Dorsolateral prefrontal cortex (tissue), 120 donors: ENCODE measurements at regions of chr10 and their contacts with region 1.

Region 1: DNA sequence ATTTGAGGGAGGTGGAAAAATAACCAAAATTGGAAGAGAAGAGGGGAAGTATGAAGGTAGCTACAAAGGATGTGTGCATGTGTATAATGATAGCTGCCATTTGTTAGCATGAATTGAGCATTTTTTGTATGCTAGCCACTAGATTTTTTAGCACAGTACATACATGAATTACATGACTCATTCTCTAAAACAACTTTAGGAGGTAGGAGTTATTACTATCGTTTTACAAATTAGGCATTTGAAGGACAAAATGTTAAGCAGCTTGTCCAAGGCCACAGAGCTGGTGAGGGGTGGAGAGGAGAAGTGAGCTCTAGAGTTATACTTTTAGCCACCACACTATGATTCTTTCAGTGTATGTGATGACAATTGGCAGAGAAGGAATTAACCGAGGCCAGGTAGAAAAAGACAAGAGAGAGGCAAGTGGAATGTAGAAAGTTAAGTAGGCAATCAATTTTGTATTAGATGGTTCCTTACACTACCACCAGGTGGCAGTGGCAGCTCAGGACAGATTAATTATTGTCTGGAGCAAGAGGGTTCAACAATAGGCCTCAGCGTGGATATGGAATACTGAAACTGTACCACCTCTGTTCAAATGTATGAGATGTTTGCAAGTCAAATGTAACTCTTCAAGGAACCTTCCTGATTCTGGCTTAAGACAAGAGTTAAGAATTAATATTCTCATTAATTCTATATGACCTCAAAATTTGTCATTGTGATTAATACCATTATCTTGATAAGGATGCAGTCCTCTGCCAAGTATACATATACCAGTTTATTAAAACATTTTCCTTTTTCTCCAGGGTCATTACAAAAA is 128.0 kb downstream of the MBL2 start:
- DNase-seq: peak in 4 of 10 donors; percentile 21 to 61 (median 50)
- H3K4me3 ChIP-seq: no peak overlapping the region
- H3K27ac ChIP-seq: peak overlapping the region in 9 of 59 donors; percentile 2 to 54 (median 22)
- H3K27me3 ChIP-seq: no peaks in the 10 kb centered on the region
- CTCF ChIP-seq: peak; percentile 67 to 97 (median 88)

Region 2: DNA sequence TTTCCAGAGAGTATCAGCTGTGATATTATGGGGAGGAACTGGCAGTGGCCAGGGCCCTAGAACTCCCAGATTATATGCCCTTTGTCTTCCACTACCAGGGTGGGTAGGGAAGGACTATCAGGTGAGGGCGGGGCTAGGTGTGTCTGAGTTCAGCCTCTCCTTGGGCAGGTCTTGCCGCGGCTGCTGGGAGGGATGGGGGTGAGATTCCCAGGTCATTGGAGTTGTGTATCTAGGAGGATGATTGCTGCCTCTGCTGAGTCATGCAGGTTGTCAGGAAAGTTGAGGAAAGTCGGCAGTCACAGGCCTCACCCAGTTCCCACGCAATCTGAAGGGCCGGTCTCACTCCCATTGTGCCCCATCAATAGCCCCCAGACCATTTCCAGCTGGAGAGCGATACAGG is 145.3 kb before region 1 on chr10:
- intact Hi-C with region 1: no loop called
- DNase-seq: no peak
- H3K4me3 ChIP-seq: no peak overlapping the region
- H3K27ac ChIP-seq: no peak overlapping the region
- H3K27me3 ChIP-seq: peaks cover 0 to 4% (median 0%) of the 10 kb centered on the region in 45 donors
- CTCF ChIP-seq: no peak

Region 3: DNA sequence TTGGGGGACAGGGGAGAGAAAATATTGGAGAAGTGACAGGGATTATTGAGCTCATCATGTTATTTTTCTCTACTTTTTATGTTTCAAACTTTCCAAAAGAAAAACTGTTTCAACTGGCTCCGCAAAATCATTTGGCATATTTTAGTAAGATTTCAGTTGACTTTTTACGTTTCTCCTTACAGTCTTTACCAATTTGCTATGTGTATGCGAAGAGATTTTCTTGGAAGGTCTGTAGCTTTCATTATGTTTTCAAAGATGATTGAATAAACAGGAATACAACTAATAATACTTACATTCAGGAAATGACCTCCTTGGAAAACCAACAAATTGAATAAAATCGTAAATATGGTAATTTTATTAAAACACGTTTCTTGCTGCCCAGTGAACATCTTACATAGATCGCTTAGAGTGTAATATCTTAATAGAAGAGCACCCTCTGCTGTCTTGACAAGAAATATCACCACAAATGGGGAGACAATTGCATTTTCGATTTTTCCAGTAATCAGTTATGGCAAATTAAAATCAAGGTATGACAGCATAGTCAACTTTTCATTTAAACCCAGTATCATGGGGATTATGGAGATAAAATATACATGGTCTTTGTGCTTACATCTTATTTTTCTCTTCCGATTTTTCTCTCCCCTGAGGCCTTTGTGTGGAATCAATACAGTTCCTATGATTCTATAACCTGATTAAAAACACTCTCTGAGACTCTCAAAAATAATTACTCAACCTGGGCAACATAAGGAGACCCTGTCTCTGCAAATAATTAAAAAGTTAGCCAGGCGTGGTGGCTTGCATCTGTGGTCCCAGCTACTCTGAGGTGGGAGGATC is 84.9 kb after region 1 on chr10:
- intact Hi-C with region 1: loop called (anchors 1 to 2 kb)
- DNase-seq: no peak
- H3K4me3 ChIP-seq: peak overlapping the region in 43 of 59 donors; percentile 7 to 54 (median 32)
- H3K27ac ChIP-seq: no peak overlapping the region
- H3K27me3 ChIP-seq: no peaks in the 10 kb centered on the region
- CTCF ChIP-seq: peak; percentile 35 to 88 (median 74)

Region 4: DNA sequence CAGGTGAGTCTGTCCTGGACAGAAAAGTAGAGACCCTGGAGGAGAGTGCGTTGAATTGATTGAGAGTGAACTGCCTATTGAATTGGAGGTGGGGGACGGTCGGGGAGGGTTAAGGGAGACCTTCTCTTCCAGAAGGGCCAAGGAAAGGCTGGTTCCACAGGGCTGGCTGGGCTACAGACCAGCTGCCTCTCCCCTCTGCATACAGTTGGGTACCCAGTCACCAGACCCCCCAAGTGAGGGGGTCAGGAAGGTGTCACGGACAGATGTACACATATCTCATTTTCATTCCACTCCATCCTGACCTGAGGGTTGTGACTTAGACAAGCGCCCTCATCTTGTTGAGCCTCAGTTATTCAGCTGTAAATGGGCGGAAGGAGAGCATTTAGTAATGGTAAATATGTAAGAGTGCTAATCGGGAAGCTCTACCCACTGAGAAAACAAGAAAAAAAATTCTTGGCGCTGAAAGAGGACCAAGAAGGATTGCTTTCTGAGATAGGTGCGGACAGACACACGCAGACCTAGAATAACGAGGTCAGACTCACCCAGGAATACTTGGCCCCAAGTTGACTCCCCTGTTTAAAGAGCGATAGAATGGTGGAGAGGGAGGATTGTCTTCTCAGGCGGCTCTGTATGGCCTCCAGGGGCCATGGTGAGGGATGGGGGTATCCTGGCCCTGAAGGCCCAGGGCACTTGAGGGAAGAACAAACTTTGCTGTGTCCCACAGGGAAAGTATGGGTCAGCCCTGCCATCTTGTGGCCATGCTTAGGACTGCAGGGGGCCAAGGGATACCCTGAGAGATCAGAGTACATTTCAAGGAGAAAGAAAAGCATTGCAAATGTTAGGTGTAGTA is 135.2 kb after region 1 on chr10:
- intact Hi-C with region 1: loop called in 1 of 2 experiments (anchors 5 kb)
- DNase-seq: peak in 9 of 10 donors; percentile 17 to 78 (median 64)
- H3K4me3 ChIP-seq: no peak overlapping the region
- H3K27ac ChIP-seq: no peak overlapping the region
- H3K27me3 ChIP-seq: peaks cover 0 to 13% (median 0%) of the 10 kb centered on the region in 45 donors
- CTCF ChIP-seq: peak; percentile 42 to 96 (median 84)